ENCODE measurements at regions of chrX and their contacts with region 1.

Region 1: GRCh38 chrX:150702966-150703694 is 9.9 kb downstream of the MTMR1 start:
- DNase-seq: no peak
- H3K4me3 ChIP-seq: no peak overlapping the region
- CTCF ChIP-seq: no peak

Region 2: GRCh38 chrX:150715184-150715583 is 12.1 kb after region 1 on chrX:
- CTCF ChIA-PET with region 1: interaction called, 10 read pairs
- POLR2A ChIA-PET with region 1: no interaction called
- DNase-seq: no peak
- H3K4me3 ChIP-seq: no peak overlapping the region
- CTCF ChIP-seq: no peak

Region 3: DNA sequence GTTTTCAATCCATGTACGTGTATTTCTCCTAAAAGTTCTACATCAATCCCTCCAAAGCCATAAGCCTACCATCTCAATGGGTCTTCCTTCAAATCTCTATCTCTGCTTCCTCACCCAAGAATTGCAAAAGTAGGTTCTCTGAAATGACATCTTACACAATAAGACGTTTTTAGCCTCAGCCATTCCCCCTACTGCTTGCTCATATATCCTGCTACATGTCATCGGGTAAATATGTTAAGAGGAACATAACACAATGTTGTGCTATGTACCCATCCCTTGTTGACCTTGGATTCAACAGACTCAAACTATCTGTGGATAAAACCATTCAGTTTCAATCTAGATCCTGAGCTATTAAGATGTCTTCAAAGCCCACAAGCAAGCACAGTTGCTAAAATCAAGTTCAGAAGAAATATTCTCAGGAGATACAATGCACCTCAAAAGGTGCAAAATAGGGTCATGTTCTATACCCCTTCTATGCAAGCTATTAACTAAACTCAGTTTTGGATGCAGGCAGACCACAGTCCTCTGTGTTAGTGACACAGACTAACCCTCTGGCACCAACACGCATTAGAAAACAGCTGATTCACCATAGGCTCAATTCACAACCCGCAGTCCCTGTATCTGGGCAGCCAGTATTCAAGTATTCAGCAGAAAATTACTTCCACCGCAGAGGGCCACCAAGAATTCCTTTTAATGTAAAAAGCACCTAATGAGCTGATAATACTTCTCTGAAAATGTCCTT is 138.5 kb after region 1 on chrX:
- CTCF ChIA-PET with region 1: no interaction called
- POLR2A ChIA-PET with region 1: no interaction called
- DNase-seq: no peak
- H3K4me3 ChIP-seq: no peak overlapping the region
- CTCF ChIP-seq: no peak